GM10248 (cell line): ENCODE measurements at regions of chr12 and their contacts with region 1.

Region 1: GRCh38 chr12:46303039-46303666 is 34.3 kb upstream of the SLC38A1 start:
- DNase-seq: peak; percentile 47
- CTCF ChIP-seq: peak; percentile 24

Region 2: DNA sequence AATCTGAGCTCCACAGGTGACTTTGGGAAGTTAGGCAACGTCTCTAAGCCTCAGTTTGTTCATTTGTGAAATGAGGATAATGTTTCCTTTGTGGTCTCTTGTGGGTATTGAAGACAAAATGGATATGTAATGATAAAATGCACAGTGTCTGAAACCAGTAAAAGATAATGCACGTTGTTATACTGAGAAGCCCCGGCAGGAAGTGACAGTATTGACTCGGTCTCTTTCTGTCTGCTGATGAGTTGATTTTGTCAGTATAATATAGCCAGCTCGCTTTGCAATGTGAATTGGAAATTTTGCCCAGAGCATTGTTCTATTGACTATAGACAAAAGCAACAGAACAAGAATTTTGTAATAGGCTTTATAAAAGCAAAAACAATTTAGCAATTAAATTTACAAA is 14.9 kb after region 1 on chr12:
- CTCF ChIA-PET with region 1: interaction called, 11 read pairs
- POLR2A ChIA-PET with region 1: no interaction called
- DNase-seq: no peak
- CTCF ChIP-seq: no peak